Activated naive CD4-positive, alpha-beta T cell treated with anti-CD3 and anti-CD28 coated beads for 36 hours (primary cell): ENCODE measurements at regions of chr4 and their contacts with region 1.

Region 1: DNA sequence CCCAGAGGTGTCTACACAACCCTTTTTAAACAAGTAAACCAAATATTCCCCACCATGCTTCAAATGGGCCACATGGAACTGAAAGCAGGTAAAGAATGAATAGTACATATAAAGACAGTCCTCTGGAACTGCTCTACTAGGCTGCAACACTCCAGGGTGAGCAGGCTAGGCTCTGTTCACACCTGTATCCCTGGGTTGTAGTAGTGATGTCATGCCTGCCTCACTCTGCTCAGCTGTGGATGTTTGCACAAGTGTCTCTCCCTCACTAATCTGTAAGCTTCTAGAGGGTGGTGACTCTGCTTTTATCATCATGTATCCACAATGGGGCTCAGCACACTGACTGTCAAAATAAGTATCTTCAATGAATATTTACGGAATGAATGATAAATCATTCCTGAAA is 20.4 kb downstream of the LEF1 start:
- DNase-seq: peak; percentile 77
- H3K4me3 Mint-ChIP-seq: peak overlapping the region; percentile 53
- H3K27ac Mint-ChIP-seq: peak overlapping the region; percentile 99
- H3K4me1 Mint-ChIP-seq: peaks cover 91% of the 10 kb centered on the region
- H3K27me3 Mint-ChIP-seq: no peaks in the 10 kb centered on the region

Region 2: DNA sequence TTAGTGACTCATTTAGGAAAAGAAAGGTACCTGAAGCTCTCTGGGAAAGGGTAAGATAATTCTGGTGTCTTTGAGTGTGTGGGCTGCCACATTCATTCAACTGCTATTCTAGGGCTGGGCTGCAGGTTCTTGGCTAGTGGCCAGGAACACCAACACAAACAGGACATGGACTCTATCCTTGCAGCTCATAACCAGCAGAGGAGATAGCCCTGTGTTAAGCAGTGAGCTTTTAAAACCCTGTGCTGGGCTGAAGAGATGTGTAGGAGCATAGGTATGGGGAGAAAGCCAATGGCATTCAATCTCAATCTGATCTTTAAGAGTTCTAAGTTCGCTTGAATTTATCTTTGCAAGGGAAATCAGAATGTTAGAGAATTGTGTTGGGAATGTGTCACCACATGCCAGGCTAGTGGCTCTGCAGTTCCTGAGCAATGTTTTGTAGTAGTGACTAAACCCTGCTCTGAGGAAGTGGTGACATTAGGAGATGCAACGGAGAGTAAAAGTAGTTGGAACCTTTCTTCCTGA is 284.4 kb before region 1 on chr4:
- CTCF ChIA-PET with region 1: no interaction called
- intact Hi-C with region 1: no loop called
- DNase-seq: peak; percentile 45
- H3K4me3 Mint-ChIP-seq: no peak overlapping the region
- H3K27ac Mint-ChIP-seq: no peak overlapping the region
- H3K4me1 Mint-ChIP-seq: peaks cover 16% of the 10 kb centered on the region
- H3K27me3 Mint-ChIP-seq: peaks cover 13% of the 10 kb centered on the region

Region 3: GRCh38 chr4:108100827-108101226 is 47.5 kb before region 1 on chr4:
- CTCF ChIA-PET with region 1: interaction called, 4 read pairs
- intact Hi-C with region 1: loop called (anchors 1 kb)
- DNase-seq: no peak
- H3K4me3 Mint-ChIP-seq: peak overlapping the region; percentile 7
- H3K27ac Mint-ChIP-seq: peak overlapping the region; percentile 89
- H3K4me1 Mint-ChIP-seq: peaks cover 92% of the 10 kb centered on the region
- H3K27me3 Mint-ChIP-seq: no peaks in the 10 kb centered on the region

Region 4: GRCh38 chr4:108160741-108161352 is 12.5 kb after region 1 on chr4:
- CTCF ChIA-PET with region 1: interaction called, 10 read pairs
- intact Hi-C with region 1: loop called (anchors 1 kb)
- DNase-seq: no peak
- H3K4me3 Mint-ChIP-seq: peak overlapping the region; percentile 57
- H3K27ac Mint-ChIP-seq: peak overlapping the region; percentile 97
- H3K4me1 Mint-ChIP-seq: peaks cover 58% of the 10 kb centered on the region
- H3K27me3 Mint-ChIP-seq: no peaks in the 10 kb centered on the region

Region 5: GRCh38 chr4:108327642-108328382 is 179.5 kb after region 1 on chr4:
- CTCF ChIA-PET with region 1: no interaction called
- intact Hi-C with region 1: no loop called
- DNase-seq: no peak
- H3K4me3 Mint-ChIP-seq: no peak overlapping the region
- H3K27ac Mint-ChIP-seq: no peak overlapping the region
- H3K4me1 Mint-ChIP-seq: peaks cover 22% of the 10 kb centered on the region
- H3K27me3 Mint-ChIP-seq: no peaks in the 10 kb centered on the region